Endothelial cell of umbilical vein (primary cell): ENCODE measurements at regions of chr11 and their contacts with region 1.

Region 1: DNA sequence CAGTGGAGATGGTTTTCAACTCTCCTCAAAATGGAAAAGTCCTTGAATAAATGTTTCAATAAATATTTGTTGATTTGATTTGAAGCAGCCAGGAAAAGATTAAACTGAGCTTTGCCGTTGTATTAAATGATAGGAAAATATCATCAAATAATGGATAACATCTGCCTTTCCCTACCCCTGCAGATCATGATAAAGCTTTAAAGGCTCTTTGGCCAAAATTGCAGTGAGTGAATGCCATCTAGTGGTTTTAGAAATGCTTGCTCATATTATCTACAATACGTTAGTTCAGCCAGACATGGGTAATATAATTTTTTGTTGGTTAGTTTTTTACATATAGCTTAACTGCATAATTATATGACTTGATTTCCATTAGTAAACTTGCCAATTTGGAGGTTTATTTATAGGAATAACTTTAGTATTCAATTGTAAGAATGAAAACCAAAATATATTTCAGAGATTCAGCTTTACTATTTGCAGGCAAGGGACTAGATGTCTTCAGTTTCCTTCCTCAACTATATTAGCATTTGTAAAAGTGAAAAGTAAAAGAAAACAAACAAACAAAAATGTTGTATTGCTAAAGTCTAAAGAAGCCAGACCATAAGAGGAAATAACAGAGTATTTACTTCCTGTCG is 159.2 kb downstream of the MSANTD4 start:
- DNase-seq: peak; percentile 73
- H3K4me3 ChIP-seq: no peak overlapping the region
- H3K27ac ChIP-seq: no peak overlapping the region
- H3K4me1 ChIP-seq: no peaks in the 10 kb centered on the region
- H3K27me3 ChIP-seq: peaks cover 0 to 2% of the 10 kb centered on the region in 2 experiments
- CTCF ChIP-seq: peak; percentile 39 to 49
- POLR2A ChIP-seq: no peak

Region 2: GRCh38 chr11:104164028-104164520 is 1698.8 kb before region 1 on chr11 and contains the start of gene PDGFD:
- CTCF ChIA-PET with region 1: interaction called, 35 read pairs
- POLR2A ChIA-PET with region 1: no interaction called
- dilution Hi-C with region 1: no loop called
- intact Hi-C with region 1: loop called (anchors 5 kb)
- DNase-seq: peak; percentile 89
- H3K4me3 ChIP-seq: peak within 1 kb of the TSS; percentile 66 to 94 (median 93)
- H3K27ac ChIP-seq: peak within 1 kb of the TSS; percentile 52
- H3K4me1 ChIP-seq: peaks cover 10% of the 10 kb centered on the region
- H3K27me3 ChIP-seq: no peaks in the 10 kb centered on the region
- CTCF ChIP-seq: peak; percentile 57 to 73
- POLR2A ChIP-seq: no peak
- total RNA-seq, gene PDGFD: 13.1 and 14.1 TPM in 2 replicates

Region 3: GRCh38 chr11:104609311-104610085 is 1253.4 kb before region 1 on chr11:
- CTCF ChIA-PET with region 1: interaction called, 68 read pairs
- POLR2A ChIA-PET with region 1: no interaction called
- dilution Hi-C with region 1: no loop called
- intact Hi-C with region 1: loop called (anchors 1 kb)
- DNase-seq: peak; percentile 80
- H3K4me3 ChIP-seq: no peak overlapping the region
- H3K27ac ChIP-seq: no peak overlapping the region
- H3K4me1 ChIP-seq: peaks cover 8% of the 10 kb centered on the region
- H3K27me3 ChIP-seq: no peaks in the 10 kb centered on the region
- CTCF ChIP-seq: peak; percentile 69 to 74
- POLR2A ChIP-seq: no peak

Region 4: GRCh38 chr11:104897891-104898684 is 964.8 kb before region 1 on chr11 and contains the start of gene CASP12:
- CTCF ChIA-PET with region 1: interaction called, 3 read pairs
- POLR2A ChIA-PET with region 1: no interaction called
- dilution Hi-C with region 1: no loop called
- intact Hi-C with region 1: loop called (anchors 5 kb)
- DNase-seq: peak; percentile 97
- H3K4me3 ChIP-seq: peak within 1 kb of the TSS in 2 of 3 experiments; percentile 23 to 41
- H3K27ac ChIP-seq: peak within 1 kb of the TSS; percentile 74
- H3K4me1 ChIP-seq: peaks cover 30% of the 10 kb centered on the region
- H3K27me3 ChIP-seq: no peaks in the 10 kb centered on the region
- CTCF ChIP-seq: no peak
- POLR2A ChIP-seq: peak; percentile 14
- total RNA-seq, gene CASP12: 2.6 and 3.9 TPM in 2 replicates

Region 5: GRCh38 chr11:105852403-105852802 is 10.4 kb before region 1 on chr11:
- CTCF ChIA-PET with region 1: interaction called, 24 read pairs
- POLR2A ChIA-PET with region 1: no interaction called
- dilution Hi-C with region 1: no loop called
- intact Hi-C with region 1: no loop called
- DNase-seq: no peak
- H3K4me3 ChIP-seq: no peak overlapping the region
- H3K27ac ChIP-seq: no peak overlapping the region
- H3K4me1 ChIP-seq: no peaks in the 10 kb centered on the region
- H3K27me3 ChIP-seq: no peaks in the 10 kb centered on the region
- CTCF ChIP-seq: no peak
- POLR2A ChIP-seq: no peak

Region 6: DNA sequence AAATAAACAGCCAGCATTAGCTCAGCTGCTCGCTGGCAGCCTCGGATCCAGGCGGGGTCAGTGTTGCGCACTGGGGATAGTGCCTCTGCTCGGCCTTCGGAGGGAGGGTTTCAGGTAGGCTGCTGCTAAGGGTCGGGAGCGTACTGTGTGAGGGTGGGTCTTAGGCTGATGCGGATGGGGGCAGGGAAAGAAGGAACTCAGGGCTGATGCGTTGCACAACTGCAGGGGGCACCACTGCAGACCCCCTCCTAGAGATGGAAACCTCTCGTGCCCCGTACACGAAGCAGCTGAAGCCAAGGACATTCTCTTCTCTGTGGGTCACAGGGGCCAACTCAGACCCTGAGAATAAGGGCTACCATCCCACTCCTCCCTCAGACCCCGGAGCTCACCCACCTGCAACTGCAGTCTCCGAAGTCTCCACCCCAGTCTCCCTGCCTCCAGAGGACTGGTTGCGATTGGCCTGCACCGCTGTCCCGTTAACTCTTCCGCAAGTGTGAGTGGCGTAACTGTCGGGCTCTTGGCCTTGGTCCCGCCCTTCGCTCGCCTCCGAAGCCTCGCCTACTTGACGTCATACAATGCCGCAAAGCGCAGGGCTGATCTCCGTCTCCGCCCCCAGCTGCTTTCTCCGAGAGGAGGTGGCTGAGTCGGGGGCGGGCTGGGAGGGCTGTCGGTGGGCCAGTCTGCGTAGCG is 214.2 kb after region 1 on chr11 and contains the start of gene KBTBD3:
- CTCF ChIA-PET with region 1: no interaction called
- POLR2A ChIA-PET with region 1: no interaction called
- dilution Hi-C with region 1: no loop called
- intact Hi-C with region 1: no loop called
- DNase-seq: peak; percentile 100
- H3K4me3 ChIP-seq: peak within 1 kb of the TSS; percentile 25 to 96 (median 86)
- H3K27ac ChIP-seq: peak within 1 kb of the TSS; percentile 65
- H3K4me1 ChIP-seq: peaks cover 14% of the 10 kb centered on the region
- H3K27me3 ChIP-seq: no peaks in the 10 kb centered on the region
- CTCF ChIP-seq: peak; percentile 37 to 64
- POLR2A ChIP-seq: peak; percentile 28
- total RNA-seq, gene KBTBD3: 2.4 and 3.6 TPM in 2 replicates

Region 7: GRCh38 chr11:106133529-106133928 is 270.7 kb after region 1 on chr11:
- CTCF ChIA-PET with region 1: no interaction called
- POLR2A ChIA-PET with region 1: no interaction called
- dilution Hi-C with region 1: no loop called
- intact Hi-C with region 1: no loop called
- DNase-seq: peak; percentile 3
- H3K4me3 ChIP-seq: no peak overlapping the region
- H3K27ac ChIP-seq: no peak overlapping the region
- H3K4me1 ChIP-seq: no peaks in the 10 kb centered on the region
- H3K27me3 ChIP-seq: no peaks in the 10 kb centered on the region
- CTCF ChIP-seq: no peak
- POLR2A ChIP-seq: no peak

Region 8: DNA sequence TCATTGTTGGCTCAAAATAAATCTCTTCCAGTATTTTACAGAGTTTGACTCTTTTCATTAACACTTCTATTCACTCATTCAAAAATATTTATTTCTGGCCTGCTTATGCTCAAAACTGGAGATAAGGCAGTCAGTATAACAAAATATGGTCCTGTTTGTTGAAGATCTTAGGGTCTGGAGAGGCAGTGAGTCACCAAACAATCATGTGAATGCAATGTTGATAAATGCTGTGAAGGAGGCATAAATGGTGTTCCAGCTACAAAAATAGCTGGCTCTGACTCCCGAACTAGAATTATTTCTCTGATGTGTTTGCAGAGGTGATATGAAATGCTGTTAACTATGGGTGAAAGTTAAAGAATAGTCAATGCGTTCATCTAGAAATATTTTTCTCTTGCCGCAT is 605.2 kb after region 1 on chr11:
- CTCF ChIA-PET with region 1: no interaction called
- POLR2A ChIA-PET with region 1: no interaction called
- dilution Hi-C with region 1: no loop called
- intact Hi-C with region 1: no loop called
- DNase-seq: peak; percentile 12
- H3K4me3 ChIP-seq: no peak overlapping the region
- H3K27ac ChIP-seq: no peak overlapping the region
- H3K4me1 ChIP-seq: peaks cover 22% of the 10 kb centered on the region
- H3K27me3 ChIP-seq: no peaks in the 10 kb centered on the region
- CTCF ChIP-seq: no peak
- POLR2A ChIP-seq: no peak